ENCODE measurements at regions of chr15 and their contacts with region 1.

Region 1: DNA sequence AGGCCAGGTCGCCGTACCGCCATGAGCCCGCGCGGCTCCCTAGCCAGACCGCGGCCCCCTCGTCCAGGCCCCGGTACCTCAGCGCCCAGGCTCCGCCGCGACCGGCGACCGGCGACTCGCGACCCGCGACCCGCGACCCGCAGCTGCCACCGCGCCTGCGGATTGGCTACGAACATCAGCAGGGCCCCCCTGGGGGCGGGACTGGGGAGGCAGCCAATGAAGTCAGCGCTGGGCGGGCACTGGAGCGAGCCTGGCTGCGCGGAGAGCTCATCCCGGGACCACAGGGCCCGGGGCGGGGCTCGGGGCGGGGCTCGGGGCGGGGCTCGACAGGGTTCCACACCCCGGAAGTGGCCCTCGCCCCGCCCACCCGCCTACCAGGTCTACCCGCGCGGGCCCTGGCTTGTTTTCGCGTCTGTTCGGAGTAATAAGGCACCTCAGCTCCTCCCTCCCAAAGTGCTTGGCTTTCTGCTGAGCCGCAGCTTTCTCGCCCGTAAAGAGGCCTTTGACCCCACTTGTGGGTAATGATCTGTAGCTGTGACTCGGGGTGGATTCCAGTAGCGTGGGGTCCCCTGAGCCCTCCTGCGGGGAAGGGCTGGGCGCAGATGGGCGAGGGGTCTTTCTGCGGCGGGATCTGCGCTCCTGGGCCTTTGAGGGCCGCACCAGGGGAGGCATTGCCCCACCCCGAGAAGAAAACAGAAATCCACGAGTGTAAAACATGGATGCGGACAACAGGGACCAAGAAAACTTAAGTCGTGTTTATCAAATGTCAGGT is at the start of gene LYSMD4:
- DNase-seq: peak; percentile 93 to 98 (median 96)
- ATAC-seq: peak; percentile 100
- H3K4me3 ChIP-seq: peak within 1 kb of the TSS; percentile 70
- H3K4me3 Mint-ChIP-seq: peak within 1 kb of the TSS; percentile 81 to 92 (median 88)
- H3K27ac ChIP-seq: peak within 1 kb of the TSS; percentile 84
- H3K27ac Mint-ChIP-seq: peak within 1 kb of the TSS; percentile 82 to 97 (median 95)
- H3K4me1 ChIP-seq: peaks cover 10 to 13% of the 10 kb centered on the region in 2 donors
- H3K4me1 Mint-ChIP-seq: peaks cover 5 to 36% (median 27%) of the 10 kb centered on the region in 7 donors
- H3K27me3 ChIP-seq: no peaks in the 10 kb centered on the region
- H3K27me3 Mint-ChIP-seq: no peaks in the 10 kb centered on the region
- total RNA-seq, gene LYSMD4: 7.9 to 22.4 (median 15.4) TPM

Region 2: GRCh38 chr15:99239545-99240198 is 493.8 kb before region 1 on chr15:
- CTCF ChIA-PET with region 1: no interaction called
- POLR2A ChIA-PET with region 1: no interaction called
- intact Hi-C with region 1: no loop called
- DNase-seq: no peak
- ATAC-seq: no peak
- H3K4me3 ChIP-seq: no peak overlapping the region
- H3K4me3 Mint-ChIP-seq: no peak overlapping the region
- H3K27ac ChIP-seq: no peak overlapping the region
- H3K27ac Mint-ChIP-seq: no peak overlapping the region
- H3K4me1 ChIP-seq: no peaks in the 10 kb centered on the region
- H3K4me1 Mint-ChIP-seq: peaks cover 0 to 17% (median 0%) of the 10 kb centered on the region in 7 donors
- H3K27me3 ChIP-seq: no peaks in the 10 kb centered on the region
- H3K27me3 Mint-ChIP-seq: peaks cover 3 to 27% (median 8%) of the 10 kb centered on the region in 5 donors

Region 3: DNA sequence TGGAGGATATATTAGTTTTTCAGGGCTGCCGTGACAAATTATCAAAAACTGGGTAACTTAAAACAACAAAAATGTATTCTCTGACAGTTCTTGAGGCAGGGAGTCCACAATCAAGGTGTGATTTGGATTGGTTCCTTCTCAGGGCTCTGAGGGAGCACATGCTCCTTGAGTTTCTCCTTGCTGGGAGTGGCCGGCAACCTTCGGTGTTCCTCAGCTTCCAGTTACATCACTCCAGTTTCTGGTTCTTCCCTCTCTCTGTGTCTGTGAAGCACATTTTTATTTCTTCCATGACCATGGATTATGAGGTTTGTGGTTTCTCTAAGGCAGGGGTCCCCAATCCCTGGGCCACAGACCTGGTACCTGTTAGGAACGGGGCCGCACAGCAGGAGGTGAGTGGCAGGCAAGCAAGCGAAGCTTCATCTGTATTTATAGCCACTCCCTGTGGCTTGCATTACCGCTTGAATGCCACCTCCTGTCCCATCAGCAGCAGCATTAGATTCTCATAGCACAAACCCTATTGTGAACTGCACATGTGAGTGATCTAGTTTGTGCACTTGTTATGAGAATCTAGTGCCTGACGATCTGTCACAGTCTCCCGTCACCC is 457.8 kb before region 1 on chr15:
- CTCF ChIA-PET with region 1: interaction called, 7 read pairs
- POLR2A ChIA-PET with region 1: interaction called, 4 read pairs
- intact Hi-C with region 1: loop called in 1 of 2 experiments (anchors 1 kb)
- DNase-seq: no peak
- ATAC-seq: no peak
- H3K4me3 ChIP-seq: no peak overlapping the region
- H3K4me3 Mint-ChIP-seq: no peak overlapping the region
- H3K27ac ChIP-seq: no peak overlapping the region
- H3K27ac Mint-ChIP-seq: peak overlapping the region in 1 of 9 donors; percentile 59
- H3K4me1 ChIP-seq: no peaks in the 10 kb centered on the region
- H3K4me1 Mint-ChIP-seq: peaks cover 7 to 35% (median 19%) of the 10 kb centered on the region in 7 donors
- H3K27me3 ChIP-seq: no peaks in the 10 kb centered on the region
- H3K27me3 Mint-ChIP-seq: no peaks in the 10 kb centered on the region

Region 4: DNA sequence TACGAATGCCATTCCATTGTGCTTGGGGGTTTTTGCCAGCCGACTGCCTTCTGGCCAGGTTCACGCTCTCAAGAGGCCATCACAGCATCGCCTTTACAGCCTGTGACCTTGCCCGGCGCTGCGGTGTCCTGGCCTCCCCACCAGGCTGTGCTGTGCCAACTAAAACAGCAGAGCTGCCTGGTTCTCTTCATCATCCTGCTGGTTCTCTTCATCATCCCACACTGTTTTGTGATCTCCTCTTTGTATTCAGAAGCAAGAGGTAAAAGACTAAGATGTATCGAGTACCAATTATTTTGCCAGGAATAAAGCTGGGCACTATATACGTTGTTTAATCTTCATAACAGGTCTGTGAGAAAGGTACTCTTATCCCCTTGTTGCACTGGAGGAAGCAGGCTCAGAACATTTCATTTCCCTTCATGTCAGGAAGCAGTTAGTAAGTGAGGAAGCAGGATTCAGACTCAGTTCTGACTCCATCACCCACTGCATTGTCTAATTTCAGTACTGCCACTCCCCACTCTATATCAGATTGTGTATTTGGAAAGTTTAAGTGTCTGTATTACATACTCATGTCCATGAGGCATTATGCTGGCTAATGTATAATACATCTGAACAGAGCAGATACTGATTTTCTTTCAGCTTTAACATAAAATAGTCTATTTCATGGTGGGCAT is 389.4 kb before region 1 on chr15:
- CTCF ChIA-PET with region 1: interaction called, 3 read pairs
- POLR2A ChIA-PET with region 1: no interaction called
- intact Hi-C with region 1: loop called in 1 of 2 experiments (anchors 1 kb)
- DNase-seq: peak; percentile 9 to 68 (median 57)
- ATAC-seq: peak; percentile 73
- H3K4me3 ChIP-seq: no peak overlapping the region
- H3K4me3 Mint-ChIP-seq: no peak overlapping the region
- H3K27ac ChIP-seq: no peak overlapping the region
- H3K27ac Mint-ChIP-seq: peak overlapping the region in 2 of 9 donors; percentile 8 to 61
- H3K4me1 ChIP-seq: no peaks in the 10 kb centered on the region
- H3K4me1 Mint-ChIP-seq: peaks cover 0 to 8% (median 6%) of the 10 kb centered on the region in 7 donors
- H3K27me3 ChIP-seq: no peaks in the 10 kb centered on the region
- H3K27me3 Mint-ChIP-seq: no peaks in the 10 kb centered on the region

Region 5: DNA sequence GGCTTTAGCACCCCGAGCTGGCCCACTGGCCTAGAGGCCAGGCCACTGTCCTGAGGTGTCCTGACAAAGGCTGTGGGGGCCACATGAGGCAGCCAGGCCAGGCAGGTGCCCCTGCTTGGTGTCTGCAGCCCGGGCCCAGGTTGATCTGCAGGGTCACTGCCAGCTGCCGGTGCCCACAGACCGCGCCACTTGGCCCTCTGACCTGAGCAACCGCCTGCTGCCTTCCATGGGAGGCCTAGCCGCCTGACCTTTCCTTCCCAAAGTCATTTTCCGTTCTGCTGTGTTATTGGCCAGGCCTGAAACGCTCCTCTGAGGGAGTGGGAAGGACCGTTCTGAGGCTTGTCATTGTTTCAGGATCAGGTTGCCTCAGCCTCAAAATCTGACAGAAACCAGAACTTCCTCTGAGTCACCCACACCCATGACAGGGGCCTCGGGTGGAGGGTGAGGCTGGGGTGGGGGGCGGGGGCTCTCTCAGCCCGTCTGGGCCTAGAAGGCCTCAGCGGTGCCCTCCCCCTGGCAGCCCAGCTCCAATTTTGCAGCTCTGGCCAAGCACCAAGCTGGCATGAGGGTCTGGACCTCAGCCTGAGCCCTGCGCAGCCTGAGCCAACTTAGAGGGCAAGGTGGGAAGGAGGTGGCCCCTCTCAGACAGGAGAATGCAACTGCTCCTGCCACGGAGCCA is 308.3 kb before region 1 on chr15:
- CTCF ChIA-PET with region 1: no interaction called
- POLR2A ChIA-PET with region 1: no interaction called
- intact Hi-C with region 1: loop called in 1 of 2 experiments (anchors 5 kb)
- DNase-seq: peak in 7 of 9 donors; percentile 33 to 63 (median 39)
- ATAC-seq: peak; percentile 79
- H3K4me3 ChIP-seq: peak overlapping the region; percentile 0
- H3K4me3 Mint-ChIP-seq: peak overlapping the region; percentile 65 to 91 (median 82)
- H3K27ac ChIP-seq: peak overlapping the region; percentile 72
- H3K27ac Mint-ChIP-seq: peak overlapping the region; percentile 89 to 98 (median 97)
- H3K4me1 ChIP-seq: peaks cover 0 to 60% of the 10 kb centered on the region in 2 donors
- H3K4me1 Mint-ChIP-seq: peaks cover 22 to 82% (median 75%) of the 10 kb centered on the region in 7 donors
- H3K27me3 ChIP-seq: no peaks in the 10 kb centered on the region
- H3K27me3 Mint-ChIP-seq: no peaks in the 10 kb centered on the region

Region 6: DNA sequence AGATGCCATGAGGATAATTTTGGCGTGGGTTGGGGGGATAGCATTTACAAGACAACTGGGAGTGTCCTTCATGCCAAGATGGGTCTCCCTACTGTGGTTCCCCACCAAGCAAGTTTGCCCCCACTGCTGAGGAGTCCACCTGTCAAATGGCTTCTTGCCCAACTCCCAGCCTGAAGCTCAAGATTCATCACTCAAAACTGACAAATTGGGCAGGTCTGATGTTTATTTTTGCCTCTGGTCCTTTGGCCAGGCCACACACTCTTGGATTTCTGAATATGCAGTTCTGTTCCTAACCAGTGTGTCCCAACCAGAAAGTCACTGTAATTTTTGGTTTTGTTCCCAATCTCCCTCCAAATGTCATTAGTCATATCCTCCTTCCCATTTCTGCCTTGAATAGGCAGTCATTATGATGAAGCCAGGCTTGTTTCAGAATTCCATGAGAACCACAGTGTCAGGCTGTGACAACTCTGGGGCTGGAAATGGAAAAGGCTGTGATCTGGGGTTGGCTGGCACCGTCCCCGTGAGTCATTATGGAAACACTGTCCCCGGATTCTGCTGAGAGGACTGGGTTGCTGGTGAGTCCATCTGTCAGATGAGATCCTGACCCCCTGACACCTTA is 196.9 kb before region 1 on chr15:
- CTCF ChIA-PET with region 1: no interaction called
- POLR2A ChIA-PET with region 1: no interaction called
- intact Hi-C with region 1: no loop called
- DNase-seq: no peak
- ATAC-seq: no peak
- H3K4me3 ChIP-seq: no peak overlapping the region
- H3K4me3 Mint-ChIP-seq: no peak overlapping the region
- H3K27ac ChIP-seq: no peak overlapping the region
- H3K27ac Mint-ChIP-seq: no peak overlapping the region
- H3K4me1 ChIP-seq: no peaks in the 10 kb centered on the region
- H3K4me1 Mint-ChIP-seq: no peaks in the 10 kb centered on the region
- H3K27me3 ChIP-seq: no peaks in the 10 kb centered on the region
- H3K27me3 Mint-ChIP-seq: peaks cover 0 to 3% (median 0%) of the 10 kb centered on the region in 5 donors

Region 7: DNA sequence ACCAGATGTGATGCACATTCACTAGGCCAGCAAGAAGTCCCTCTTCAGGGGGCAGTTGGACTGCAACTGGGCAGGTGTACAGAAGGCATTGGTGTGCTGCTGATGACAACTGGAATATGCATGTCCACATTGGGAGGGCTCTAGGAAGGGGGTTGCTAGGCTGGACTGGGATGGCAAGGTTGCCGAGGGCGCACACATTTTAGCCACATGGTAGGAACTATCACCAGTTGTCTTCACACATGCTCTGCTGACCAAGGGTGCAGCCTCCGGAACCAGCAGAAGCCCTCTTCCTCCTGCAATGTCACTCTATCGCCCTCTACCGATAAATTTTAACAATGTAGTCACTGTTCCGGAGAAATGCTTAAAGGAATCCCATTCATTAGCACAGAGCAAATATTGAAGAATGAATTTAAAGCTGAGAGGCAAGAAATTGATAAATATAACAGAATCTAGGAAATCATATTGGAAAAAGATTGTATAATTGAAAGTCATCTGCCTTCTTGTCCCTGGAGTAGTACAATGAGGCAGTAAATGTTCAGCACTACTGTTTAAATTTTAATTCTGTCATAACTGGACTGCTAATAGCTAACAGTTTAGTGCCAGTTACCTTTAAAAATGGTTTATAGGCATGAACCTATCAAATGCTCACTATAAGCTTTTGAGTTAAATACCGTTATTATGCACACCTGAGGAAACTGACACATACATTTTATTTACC is 22.4 kb after region 1 on chr15:
- CTCF ChIA-PET with region 1: interaction called, 16 read pairs
- POLR2A ChIA-PET with region 1: interaction called, 9 read pairs
- intact Hi-C with region 1: loop called (anchors 1 kb)
- DNase-seq: peak in 8 of 9 donors; percentile 29 to 72 (median 62)
- ATAC-seq: peak; percentile 86
- H3K4me3 ChIP-seq: no peak overlapping the region
- H3K4me3 Mint-ChIP-seq: no peak overlapping the region
- H3K27ac ChIP-seq: no peak overlapping the region
- H3K27ac Mint-ChIP-seq: peak overlapping the region in 1 of 9 donors; percentile 10
- H3K4me1 ChIP-seq: no peaks in the 10 kb centered on the region
- H3K4me1 Mint-ChIP-seq: peaks cover 0 to 4% (median 0%) of the 10 kb centered on the region in 7 donors
- H3K27me3 ChIP-seq: no peaks in the 10 kb centered on the region
- H3K27me3 Mint-ChIP-seq: peaks cover 0 to 5% (median 0%) of the 10 kb centered on the region in 5 donors

Measured in naive thymus-derived CD4-positive, alpha-beta T cell (primary cell).